ENCODE measurements at regions of chr13 and their contacts with region 1.

Region 1: DNA sequence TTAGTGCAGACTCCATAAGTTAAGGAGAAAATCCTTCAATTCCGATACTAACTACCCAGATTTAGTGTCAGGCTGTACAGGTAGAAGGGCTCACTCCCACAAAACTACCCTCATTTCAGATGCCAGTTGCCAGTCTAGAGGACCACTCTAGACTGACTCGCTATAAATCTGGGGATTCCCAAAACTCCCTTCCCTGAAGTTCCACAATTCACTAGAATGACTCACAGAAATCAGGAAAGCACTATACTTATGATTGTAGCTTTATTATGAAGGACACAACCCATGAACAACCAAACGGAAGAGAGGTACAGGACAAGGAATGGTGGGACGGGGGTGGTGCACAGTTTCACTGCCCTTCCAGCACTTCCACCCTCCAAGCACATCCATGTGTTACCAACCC is 321.2 kb downstream of the DIAPH3 start:
- DNase-seq: no peak
- CTCF ChIP-seq: no peak

Region 2: DNA sequence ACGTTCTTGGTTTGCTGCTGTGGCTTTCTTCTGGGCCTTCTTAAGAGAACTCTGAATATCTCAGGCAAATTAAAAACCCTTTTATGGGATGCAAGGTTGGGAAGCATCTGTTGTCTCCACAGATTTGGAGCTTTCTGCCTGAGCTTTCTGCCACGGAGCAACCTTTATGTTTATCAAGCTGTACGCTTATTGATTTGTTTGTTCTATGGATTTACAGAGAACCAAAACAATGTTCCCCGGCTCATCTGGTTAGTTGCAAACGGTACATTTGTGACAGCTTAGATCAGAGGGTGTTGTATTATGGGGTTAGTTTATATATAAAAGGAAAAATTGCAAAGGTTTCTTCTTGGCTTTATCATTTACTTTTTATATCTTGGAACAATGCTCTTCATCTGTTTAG is 158.4 kb before region 1 on chr13:
- CTCF ChIA-PET with region 1: no interaction called
- POLR2A ChIA-PET with region 1: no interaction called
- DNase-seq: no peak
- CTCF ChIP-seq: no peak

Region 3: DNA sequence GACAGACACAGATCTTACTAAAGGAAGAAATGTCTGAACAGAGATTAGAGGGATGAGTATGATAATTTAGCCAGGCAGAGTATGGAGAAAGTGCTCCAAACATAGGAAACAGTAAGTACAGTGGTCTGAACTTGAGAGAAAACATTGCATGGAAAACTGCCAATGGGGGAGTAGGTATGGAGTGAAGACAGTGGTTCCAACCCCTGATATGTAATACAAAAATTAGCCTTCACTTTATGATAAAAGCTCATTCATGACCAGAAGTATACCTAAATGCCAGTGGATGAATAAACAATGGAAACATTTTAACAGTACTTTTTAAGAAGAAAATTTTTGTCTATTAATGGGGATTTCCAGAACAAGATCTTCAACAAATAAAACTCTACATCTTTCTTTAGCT is 12.8 kb before region 1 on chr13:
- CTCF ChIA-PET with region 1: interaction called, 18 read pairs
- POLR2A ChIA-PET with region 1: no interaction called
- DNase-seq: no peak
- CTCF ChIP-seq: no peak